Esophagus muscularis mucosa (tissue), 4 donors: ENCODE measurements at regions of chr6 and their contacts with region 1.

Region 1: DNA sequence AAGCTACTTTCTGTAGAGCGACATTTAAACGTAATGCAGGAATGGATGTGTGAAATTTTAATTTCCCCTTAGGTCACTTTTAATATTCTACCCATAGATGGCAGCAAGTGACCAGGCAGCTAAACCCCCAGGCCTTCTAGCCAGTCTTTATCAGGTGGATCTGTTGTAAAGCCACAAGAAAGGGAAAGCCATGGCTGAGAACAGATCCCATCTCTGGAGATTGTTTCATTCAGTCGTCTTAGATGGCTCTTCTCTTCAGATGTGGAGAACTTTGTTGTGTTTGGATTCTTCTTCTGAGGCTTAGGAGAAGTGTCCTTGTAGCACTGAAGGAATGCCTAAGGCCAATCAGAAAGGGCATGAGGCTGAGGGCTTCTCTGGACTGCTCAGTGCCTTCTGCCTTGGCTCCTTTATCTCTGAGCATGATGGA is 15.8 kb upstream of the RNF182 start:
- DNase-seq: no peak
- H3K4me3 ChIP-seq: no peak overlapping the region
- H3K27ac ChIP-seq: no peak overlapping the region
- H3K4me1 ChIP-seq: no peaks in the 10 kb centered on the region
- H3K27me3 ChIP-seq: peaks cover 0 to 15% (median 0%) of the 10 kb centered on the region in 4 donors
- CTCF ChIP-seq: peak; percentile 74 to 80 (median 79)
- EP300 ChIP-seq: no peak
- POLR2A ChIP-seq: no peak

Region 2: GRCh38 chr6:14035448-14035847 is 126.5 kb after region 1 on chr6:
- intact Hi-C with region 1: no loop called
- DNase-seq: no peak
- H3K4me3 ChIP-seq: no peak overlapping the region
- H3K27ac ChIP-seq: no peak overlapping the region
- H3K4me1 ChIP-seq: no peaks in the 10 kb centered on the region
- H3K27me3 ChIP-seq: peaks cover 0 to 23% (median 0%) of the 10 kb centered on the region in 4 donors
- CTCF ChIP-seq: no peak
- EP300 ChIP-seq: no peak
- POLR2A ChIP-seq: no peak

Region 3: DNA sequence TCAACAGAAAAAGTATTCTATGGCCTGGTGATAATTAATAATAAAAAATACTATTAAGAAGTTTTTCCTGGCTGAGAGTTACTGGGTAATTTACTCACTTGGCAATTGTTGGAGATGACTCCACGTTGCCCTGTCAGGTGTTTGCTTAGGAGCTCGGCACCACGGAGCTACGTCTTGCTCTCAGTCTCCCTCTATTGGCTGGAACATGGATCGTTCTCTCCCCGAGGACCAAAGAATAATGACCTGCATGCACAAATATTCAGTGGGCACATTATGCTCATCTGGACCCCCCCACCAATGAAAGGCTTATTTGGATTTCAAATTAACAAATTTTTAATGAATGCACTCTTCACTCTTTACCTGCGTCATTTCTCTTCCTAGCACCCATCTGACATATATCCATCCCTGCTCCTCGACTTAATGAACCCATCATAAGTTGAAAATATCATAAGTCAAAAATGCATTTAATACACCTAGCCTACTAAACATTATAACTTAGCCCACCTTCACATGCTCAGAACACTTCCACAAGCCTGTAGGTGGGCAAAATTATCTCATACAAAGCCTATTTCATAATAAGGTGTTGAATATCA is 137.6 kb after region 1 on chr6:
- intact Hi-C with region 1: loop called (anchors 5 kb)
- DNase-seq: no peak
- H3K4me3 ChIP-seq: no peak overlapping the region
- H3K27ac ChIP-seq: no peak overlapping the region
- H3K4me1 ChIP-seq: no peaks in the 10 kb centered on the region
- H3K27me3 ChIP-seq: peaks cover 0 to 36% (median 0%) of the 10 kb centered on the region in 4 donors
- CTCF ChIP-seq: peak; percentile 44 to 66 (median 53)
- EP300 ChIP-seq: no peak
- POLR2A ChIP-seq: no peak

Region 4: DNA sequence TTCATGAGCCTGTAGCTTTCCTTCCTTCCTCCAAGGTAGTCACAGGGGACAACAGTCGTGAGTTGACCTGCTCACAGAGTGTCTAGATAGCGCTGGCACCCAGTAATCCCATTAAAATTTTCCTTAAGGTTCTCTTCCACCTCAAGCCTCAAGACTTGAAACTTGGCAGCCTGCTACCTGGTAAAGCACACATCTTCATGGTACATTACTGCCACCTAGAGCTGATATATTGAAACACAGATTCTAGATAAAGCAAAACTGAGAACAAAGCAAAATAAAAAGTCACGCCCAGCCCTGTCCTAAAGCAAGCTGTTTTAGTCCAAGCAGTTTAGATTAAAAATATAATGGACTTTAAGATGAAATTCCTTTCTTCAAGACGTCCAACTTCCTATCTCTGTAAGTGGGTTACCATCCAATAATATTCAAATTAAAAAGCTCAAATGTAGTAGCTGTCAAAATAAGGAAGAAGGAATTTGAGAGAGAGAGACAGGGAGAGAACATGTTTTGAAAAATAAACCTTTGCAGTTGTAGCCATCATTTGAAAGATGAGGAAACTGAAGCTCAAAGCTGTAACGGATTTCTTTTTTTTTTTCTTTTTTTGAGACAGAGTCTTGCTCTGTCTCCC is 157.9 kb after region 1 on chr6:
- intact Hi-C with region 1: loop called (anchors 5 kb)
- DNase-seq: peak; percentile 47
- H3K4me3 ChIP-seq: no peak overlapping the region
- H3K27ac ChIP-seq: no peak overlapping the region
- H3K4me1 ChIP-seq: no peaks in the 10 kb centered on the region
- H3K27me3 ChIP-seq: peaks cover 0 to 26% (median 0%) of the 10 kb centered on the region in 4 donors
- CTCF ChIP-seq: peak; percentile 58 to 74 (median 72)
- EP300 ChIP-seq: no peak
- POLR2A ChIP-seq: no peak

Region 5: DNA sequence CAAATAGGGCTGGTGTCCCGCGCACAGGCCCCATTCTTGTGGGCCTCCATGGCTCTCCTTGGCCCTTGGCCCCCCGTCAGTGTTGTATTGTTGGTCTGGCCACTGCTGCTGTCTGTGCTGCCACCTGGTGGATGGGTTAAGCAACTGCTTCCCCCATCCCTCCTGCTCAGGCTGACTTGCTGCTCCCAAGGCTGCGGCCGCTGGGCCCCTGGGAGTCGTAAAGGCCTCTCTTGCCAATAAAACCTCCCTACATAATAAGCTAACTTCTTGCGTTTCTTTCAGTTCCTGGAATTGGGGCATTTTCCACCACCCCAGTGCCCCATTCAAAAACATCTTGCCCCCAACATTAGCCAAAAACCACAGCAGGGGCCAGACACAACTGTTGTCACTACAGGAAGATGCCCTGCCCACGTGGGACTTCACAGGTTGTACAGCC is 235.7 kb after region 1 on chr6:
- intact Hi-C with region 1: loop called (anchors 5 kb)
- DNase-seq: peak; percentile 93
- H3K4me3 ChIP-seq: no peak overlapping the region
- H3K27ac ChIP-seq: no peak overlapping the region
- H3K4me1 ChIP-seq: peaks cover 0 to 18% (median 16%) of the 10 kb centered on the region in 4 donors
- H3K27me3 ChIP-seq: no peaks in the 10 kb centered on the region
- CTCF ChIP-seq: peak; percentile 86 to 98 (median 89)
- EP300 ChIP-seq: no peak
- POLR2A ChIP-seq: no peak